ENCODE measurements at regions of chr19 and their contacts with region 1.

Region 1: GRCh38 chr19:53537480-53538383 is at the start of gene ZNF331:
- DNase-seq: peak; percentile 85
- H3K4me3 Mint-ChIP-seq: peak within 1 kb of the TSS; percentile 86
- H3K27ac Mint-ChIP-seq: peak within 1 kb of the TSS; percentile 84
- H3K4me1 Mint-ChIP-seq: peaks cover 29% of the 10 kb centered on the region
- H3K27me3 Mint-ChIP-seq: no peaks in the 10 kb centered on the region
- total RNA-seq, gene ZNF331: 18.0 to 19.9 TPM

Region 2: GRCh38 chr19:53333463-53334449 is 204.0 kb before region 1 on chr19 and contains the start of gene ZNF845:
- CTCF ChIA-PET with region 1: no interaction called
- POLR2A ChIA-PET with region 1: no interaction called
- DNase-seq: peak; percentile 97
- H3K4me3 Mint-ChIP-seq: peak within 1 kb of the TSS; percentile 86
- H3K27ac Mint-ChIP-seq: peak within 1 kb of the TSS; percentile 82
- H3K4me1 Mint-ChIP-seq: peaks cover 17% of the 10 kb centered on the region
- H3K27me3 Mint-ChIP-seq: no peaks in the 10 kb centered on the region
- total RNA-seq, gene ZNF845: 9.9 to 10.0 TPM

Region 3: GRCh38 chr19:53520550-53521372 is 17.0 kb before region 1 on chr19:
- CTCF ChIA-PET with region 1: no interaction called
- POLR2A ChIA-PET with region 1: interaction called, 12 read pairs
- DNase-seq: peak; percentile 90
- H3K4me3 Mint-ChIP-seq: peak overlapping the region; percentile 98
- H3K27ac Mint-ChIP-seq: peak overlapping the region; percentile 88
- H3K4me1 Mint-ChIP-seq: peaks cover 21% of the 10 kb centered on the region
- H3K27me3 Mint-ChIP-seq: no peaks in the 10 kb centered on the region